A673 (cell line): ENCODE measurements at regions of chr2 and their contacts with region 1.

Region 1: DNA sequence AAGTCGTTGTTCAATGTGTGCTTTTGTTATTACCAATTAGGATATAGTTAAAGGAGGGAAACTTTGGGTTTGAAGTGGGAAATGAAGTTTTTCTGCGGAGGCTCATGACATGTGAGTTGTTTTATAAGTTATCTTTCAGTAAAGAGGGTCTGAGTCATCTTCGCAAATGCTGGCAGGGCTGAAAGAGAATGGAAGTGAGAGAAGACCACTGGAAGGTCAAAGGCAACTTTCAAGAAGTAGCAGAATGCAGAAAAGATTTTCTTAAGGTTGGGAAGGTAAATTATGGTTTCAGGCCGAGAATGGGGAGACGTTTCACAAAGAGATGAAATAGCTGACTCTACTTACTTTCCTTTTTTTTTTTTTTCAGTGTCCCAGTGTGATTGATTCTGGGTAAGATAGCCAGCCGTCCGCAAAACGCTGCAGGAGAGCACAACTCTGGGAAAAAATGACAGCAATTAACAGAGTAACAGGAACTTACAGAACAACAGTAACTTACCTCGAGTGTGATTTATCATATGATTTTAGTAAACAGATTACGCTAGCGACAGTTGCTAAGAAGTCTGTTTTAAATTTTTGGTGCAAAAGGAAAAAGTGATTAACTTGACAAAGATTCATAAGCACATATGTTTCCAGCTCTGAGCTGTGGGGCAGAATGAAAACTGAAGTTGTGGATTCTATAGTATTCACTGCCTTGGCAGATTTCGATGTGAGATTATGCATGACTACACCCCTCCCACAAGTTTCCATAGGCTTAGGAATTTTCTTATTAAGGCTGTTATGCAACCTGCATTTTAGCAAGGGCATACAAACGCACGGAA is 46.8 kb upstream of the ACTR3 start:
- DNase-seq: peak; percentile 32
- H3K4me3 ChIP-seq: no peak overlapping the region
- H3K27ac ChIP-seq: no peak overlapping the region
- H3K4me1 ChIP-seq: no peaks in the 10 kb centered on the region
- H3K27me3 ChIP-seq: no peaks in the 10 kb centered on the region
- CTCF ChIP-seq: no peak

Region 2: DNA sequence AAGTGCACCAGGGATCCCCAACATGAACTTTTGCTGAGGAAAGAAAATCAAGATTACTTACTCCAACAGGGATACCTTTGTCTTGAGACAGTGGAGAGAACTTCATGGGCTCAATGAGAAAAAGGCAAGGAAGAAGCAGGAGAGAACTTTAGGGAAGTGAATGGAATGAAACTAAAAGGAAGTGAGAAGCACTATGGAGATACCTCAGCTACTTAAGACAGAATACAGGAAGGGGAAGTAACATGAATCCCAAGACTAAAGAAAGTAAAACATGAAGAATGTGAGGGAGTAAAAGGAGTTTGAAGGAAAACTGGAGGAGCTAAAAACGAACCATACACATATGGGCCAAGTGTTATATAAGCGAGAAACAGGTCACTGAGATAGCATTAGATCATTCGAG is 14.3 kb after region 1 on chr2:
- CTCF ChIA-PET with region 1: no interaction called
- POLR2A ChIA-PET with region 1: no interaction called
- intact Hi-C with region 1: loop called (anchors 1 kb)
- DNase-seq: no peak
- H3K4me3 ChIP-seq: no peak overlapping the region
- H3K27ac ChIP-seq: no peak overlapping the region
- H3K4me1 ChIP-seq: no peaks in the 10 kb centered on the region
- H3K27me3 ChIP-seq: no peaks in the 10 kb centered on the region
- CTCF ChIP-seq: no peak

Region 3: GRCh38 chr2:114056294-114057143 is 213.4 kb after region 1 on chr2:
- CTCF ChIA-PET with region 1: no interaction called
- POLR2A ChIA-PET with region 1: no interaction called
- intact Hi-C with region 1: no loop called
- DNase-seq: no peak
- H3K4me3 ChIP-seq: no peak overlapping the region
- H3K27ac ChIP-seq: no peak overlapping the region
- H3K4me1 ChIP-seq: no peaks in the 10 kb centered on the region
- H3K27me3 ChIP-seq: no peaks in the 10 kb centered on the region
- CTCF ChIP-seq: no peak